Caco-2 (cell line): ENCODE measurements at regions of chr1 and their contacts with region 1.

Region 1: DNA sequence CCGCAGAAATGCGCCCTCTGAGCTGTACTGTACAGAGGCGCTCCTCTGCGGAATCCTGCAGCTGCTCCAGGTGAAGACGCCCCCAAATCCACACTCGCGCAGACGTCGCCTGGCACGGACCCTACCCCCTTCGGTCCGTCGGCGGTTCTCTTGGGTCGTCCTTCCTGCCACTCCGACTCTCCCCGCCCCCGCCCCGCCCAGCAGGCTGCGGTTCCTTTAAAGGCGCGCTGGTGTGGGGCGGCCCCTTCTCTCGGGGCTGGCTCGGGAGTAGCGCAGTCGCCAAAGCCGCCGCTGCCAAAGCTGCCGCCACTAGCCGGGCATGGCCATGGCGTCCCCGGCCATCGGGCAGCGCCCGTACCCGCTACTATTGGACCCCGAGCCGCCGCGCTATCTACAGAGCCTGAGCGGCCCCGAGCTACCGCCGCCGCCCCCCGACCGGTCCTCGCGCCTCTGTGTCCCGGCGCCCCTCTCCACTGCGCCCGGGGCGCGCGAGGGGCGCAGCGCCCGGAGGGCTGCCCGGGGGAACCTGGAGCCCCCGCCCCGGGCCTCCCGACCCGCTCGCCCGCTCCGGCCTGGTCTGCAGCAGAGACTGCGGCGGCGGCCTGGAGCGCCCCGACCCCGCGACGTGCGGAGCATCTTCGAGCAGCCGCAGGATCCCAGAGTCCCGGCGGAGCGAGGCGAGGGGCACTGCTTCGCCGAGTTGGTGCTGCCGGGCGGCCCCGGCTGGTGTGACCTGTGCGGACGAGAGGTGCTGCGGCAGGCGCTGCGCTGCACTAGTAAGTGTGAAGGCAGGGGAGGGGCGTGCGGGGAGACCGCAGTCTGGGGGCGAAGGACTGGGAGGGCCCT is at the start of gene RASSF5:
- DNase-seq: peak; percentile 59 to 76
- H3K4me3 ChIP-seq: peak within 1 kb of the TSS; percentile 48
- H3K4me3 Mint-ChIP-seq: peak within 1 kb of the TSS; percentile 62
- H3K27ac Mint-ChIP-seq: no peak within 1 kb of the TSS
- H3K4me1 ChIP-seq: peaks cover 19% of the 10 kb centered on the region
- H3K4me1 Mint-ChIP-seq: peaks cover 7% of the 10 kb centered on the region
- H3K27me3 ChIP-seq: no peaks in the 10 kb centered on the region
- H3K27me3 Mint-ChIP-seq: peaks cover 16% of the 10 kb centered on the region
- CTCF ChIP-seq: no peak
- total RNA-seq, gene RASSF5: 0.86 and 1.3 TPM in 2 replicates

Region 2: DNA sequence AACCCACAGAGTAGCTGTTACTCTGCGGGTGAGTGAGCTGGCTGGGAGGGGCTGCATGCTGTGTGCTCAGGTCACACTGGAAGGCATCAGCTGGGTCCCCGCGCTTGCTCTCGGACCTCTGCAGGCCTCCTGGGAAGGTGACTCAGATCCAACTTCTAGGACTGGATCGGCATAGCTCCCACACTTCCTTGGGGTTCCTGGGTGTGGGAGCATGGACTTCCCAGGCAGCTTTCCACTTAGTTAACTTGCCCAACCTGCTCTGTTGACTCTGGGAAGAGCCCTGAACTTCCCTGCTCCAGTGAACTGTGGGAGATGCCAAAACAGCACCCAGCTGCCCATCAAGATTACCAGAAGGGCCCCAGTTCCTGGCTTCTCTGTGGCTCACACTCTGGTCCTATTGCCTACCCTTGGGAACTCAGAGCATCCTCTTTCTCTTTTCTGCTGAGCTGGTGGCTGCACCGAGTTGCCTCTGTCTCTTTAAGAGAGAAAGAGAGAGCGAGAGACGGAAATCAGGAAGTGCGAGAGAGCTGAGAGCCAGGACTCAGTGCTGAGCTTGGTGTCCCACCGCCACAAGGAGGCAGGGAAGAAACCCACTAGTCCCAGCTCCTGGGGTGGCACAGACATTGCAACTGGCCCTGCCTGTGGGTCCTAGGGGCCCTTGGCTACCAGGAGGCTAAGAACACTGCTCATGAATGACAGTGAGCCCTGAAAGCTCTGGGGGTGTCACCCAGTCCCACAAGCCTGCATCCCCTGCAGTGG is 37.4 kb before region 1 on chr1 and contains the start of gene IKBKE:
- CTCF ChIA-PET with region 1: no interaction called
- POLR2A ChIA-PET with region 1: no interaction called
- intact Hi-C with region 1: no loop called
- DNase-seq: peak; percentile 61 to 74
- H3K4me3 ChIP-seq: peak within 1 kb of the TSS; percentile 88
- H3K4me3 Mint-ChIP-seq: peak within 1 kb of the TSS; percentile 79
- H3K27ac Mint-ChIP-seq: peak within 1 kb of the TSS; percentile 84
- H3K4me1 ChIP-seq: peaks cover 20% of the 10 kb centered on the region
- H3K4me1 Mint-ChIP-seq: peaks cover 23% of the 10 kb centered on the region
- H3K27me3 ChIP-seq: no peaks in the 10 kb centered on the region
- H3K27me3 Mint-ChIP-seq: no peaks in the 10 kb centered on the region
- CTCF ChIP-seq: peak; percentile 29 to 33
- total RNA-seq, gene IKBKE: 9.0 and 12.7 TPM in 2 replicates

Region 3: DNA sequence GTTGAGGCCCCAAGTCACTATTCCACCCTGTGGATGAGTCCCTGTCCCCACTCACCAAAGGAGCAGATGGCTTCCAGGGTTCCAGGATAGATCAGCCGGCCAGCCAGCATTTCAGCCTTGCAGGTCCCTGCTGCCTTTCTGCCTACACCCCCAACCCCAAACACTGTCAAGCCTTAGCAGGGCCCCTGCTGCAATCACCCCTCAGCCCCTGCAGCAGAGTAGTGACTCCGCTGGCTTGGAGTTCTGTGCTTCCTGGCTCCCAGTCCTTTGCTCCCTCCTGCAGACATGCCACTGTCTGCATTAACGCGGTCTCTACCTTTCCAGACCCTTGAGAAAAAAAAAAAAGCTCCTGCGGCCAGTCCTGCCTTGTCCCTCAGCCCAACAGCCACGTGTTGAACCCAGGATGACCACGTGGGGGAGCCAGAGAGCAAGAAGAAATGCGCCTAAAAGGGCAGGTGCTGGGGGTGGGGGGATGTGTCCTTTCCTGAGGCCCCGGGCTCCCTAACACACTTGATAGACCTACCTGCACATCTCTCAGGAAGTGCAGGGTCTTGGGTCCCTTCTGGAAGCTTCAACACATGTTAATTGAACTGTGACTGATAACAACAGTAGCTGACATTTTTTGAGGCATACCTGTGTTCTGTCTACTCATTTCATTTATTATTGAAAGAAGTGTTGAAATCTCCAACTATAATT is 37.2 kb after region 1 on chr1:
- CTCF ChIA-PET with region 1: interaction called, 5 read pairs
- POLR2A ChIA-PET with region 1: no interaction called
- intact Hi-C with region 1: loop called (anchors 5 kb)
- DNase-seq: peak; percentile 77 to 89
- H3K4me3 ChIP-seq: no peak overlapping the region
- H3K4me3 Mint-ChIP-seq: no peak overlapping the region
- H3K27ac Mint-ChIP-seq: no peak overlapping the region
- H3K4me1 ChIP-seq: no peaks in the 10 kb centered on the region
- H3K4me1 Mint-ChIP-seq: no peaks in the 10 kb centered on the region
- H3K27me3 ChIP-seq: no peaks in the 10 kb centered on the region
- H3K27me3 Mint-ChIP-seq: peaks cover 7% of the 10 kb centered on the region
- CTCF ChIP-seq: peak; percentile 80 to 94

Region 4: DNA sequence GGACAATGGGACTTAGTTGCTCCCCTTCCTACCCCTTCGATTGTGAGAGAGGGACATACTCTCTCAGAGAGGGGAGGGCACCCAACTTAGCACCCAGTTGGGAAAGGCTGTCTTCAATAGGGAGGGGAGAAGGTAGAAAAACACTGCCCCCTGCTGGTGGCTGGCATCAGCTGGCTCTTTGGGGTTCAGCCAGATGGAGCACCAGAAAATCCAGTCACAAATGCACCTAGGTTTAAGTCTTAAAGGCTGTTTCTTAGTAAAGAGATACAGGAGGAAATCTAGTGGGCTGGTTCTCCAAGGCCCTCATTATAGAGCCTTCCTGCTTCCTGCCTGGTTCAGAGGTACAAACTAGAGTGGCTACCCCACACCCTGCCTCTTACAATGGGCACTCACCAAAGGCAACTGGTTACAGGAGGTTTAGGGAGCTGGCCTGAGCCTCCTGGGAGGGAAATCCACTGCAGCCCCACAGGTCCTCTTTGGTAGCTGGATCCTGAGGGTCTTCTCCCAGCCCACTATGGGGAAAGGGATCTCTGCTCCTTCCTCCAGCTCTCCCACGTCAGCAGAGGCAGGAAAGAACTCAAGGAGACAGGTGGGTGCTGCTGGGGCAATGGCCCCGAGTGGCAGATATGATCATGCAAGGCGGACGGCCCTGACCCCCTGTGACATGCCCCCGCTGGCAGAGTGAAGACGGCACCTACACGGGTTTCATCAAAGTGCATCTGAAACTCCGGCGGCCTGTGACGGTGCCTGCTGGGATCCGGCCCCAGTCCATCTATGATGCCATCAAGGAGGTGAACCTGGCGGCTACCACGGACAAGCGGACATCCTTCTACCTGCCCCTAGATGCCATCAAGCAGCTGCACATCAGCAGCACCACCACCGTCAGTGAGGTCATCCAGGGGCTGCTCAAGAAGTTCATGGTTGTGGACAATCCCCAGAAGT is 76.5 kb after region 1 on chr1:
- CTCF ChIA-PET with region 1: interaction called, 3 read pairs
- POLR2A ChIA-PET with region 1: no interaction called
- intact Hi-C with region 1: loop called (anchors 1 kb)
- DNase-seq: peak; percentile 65 to 78
- H3K4me3 ChIP-seq: no peak overlapping the region
- H3K4me3 Mint-ChIP-seq: no peak overlapping the region
- H3K27ac Mint-ChIP-seq: no peak overlapping the region
- H3K4me1 ChIP-seq: no peaks in the 10 kb centered on the region
- H3K4me1 Mint-ChIP-seq: no peaks in the 10 kb centered on the region
- H3K27me3 ChIP-seq: no peaks in the 10 kb centered on the region
- H3K27me3 Mint-ChIP-seq: no peaks in the 10 kb centered on the region
- CTCF ChIP-seq: peak; percentile 82

Region 5: GRCh38 chr1:206663832-206664652 is 156.5 kb after region 1 on chr1:
- CTCF ChIA-PET with region 1: interaction called, 4 read pairs
- POLR2A ChIA-PET with region 1: no interaction called
- intact Hi-C with region 1: loop called (anchors 10 kb)
- DNase-seq: peak; percentile 59 to 78
- H3K4me3 ChIP-seq: no peak overlapping the region
- H3K4me3 Mint-ChIP-seq: no peak overlapping the region
- H3K27ac Mint-ChIP-seq: no peak overlapping the region
- H3K4me1 ChIP-seq: peaks cover 3% of the 10 kb centered on the region; the same call in 1 of the 2 replicates
- H3K4me1 Mint-ChIP-seq: peaks cover 15% of the 10 kb centered on the region
- H3K27me3 ChIP-seq: no peaks in the 10 kb centered on the region
- H3K27me3 Mint-ChIP-seq: peaks cover 7% of the 10 kb centered on the region
- CTCF ChIP-seq: peak; percentile 72 to 96

Region 6: DNA sequence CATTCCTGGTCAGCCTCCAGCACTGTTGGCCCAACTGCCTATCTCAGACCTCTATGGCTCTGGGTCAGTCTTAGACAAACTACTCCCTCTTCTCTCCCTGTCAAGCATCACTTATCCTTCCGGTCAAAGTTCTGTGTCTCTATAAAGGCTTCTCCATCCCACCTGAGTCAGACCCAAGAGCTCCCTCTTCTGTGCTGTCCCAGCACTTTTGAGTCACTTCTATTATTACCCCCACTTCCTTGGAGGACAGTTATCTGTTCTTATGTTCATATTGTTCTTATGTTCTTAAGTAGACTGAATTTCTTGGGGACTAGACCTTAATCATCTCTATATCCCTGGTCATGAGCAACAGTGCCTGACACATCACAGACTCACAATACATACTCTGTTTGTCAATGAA is 294.0 kb after region 1 on chr1:
- CTCF ChIA-PET with region 1: interaction called, 10 read pairs
- POLR2A ChIA-PET with region 1: no interaction called
- intact Hi-C with region 1: no loop called
- DNase-seq: peak; percentile 46 to 50
- H3K4me3 ChIP-seq: no peak overlapping the region
- H3K4me3 Mint-ChIP-seq: no peak overlapping the region
- H3K27ac Mint-ChIP-seq: no peak overlapping the region
- H3K4me1 ChIP-seq: no peaks in the 10 kb centered on the region
- H3K4me1 Mint-ChIP-seq: peaks cover 6% of the 10 kb centered on the region
- H3K27me3 ChIP-seq: no peaks in the 10 kb centered on the region
- H3K27me3 Mint-ChIP-seq: no peaks in the 10 kb centered on the region
- CTCF ChIP-seq: peak; percentile 16 to 51